ENCODE measurements at regions of chr4 and their contacts with region 1.

Region 1: DNA sequence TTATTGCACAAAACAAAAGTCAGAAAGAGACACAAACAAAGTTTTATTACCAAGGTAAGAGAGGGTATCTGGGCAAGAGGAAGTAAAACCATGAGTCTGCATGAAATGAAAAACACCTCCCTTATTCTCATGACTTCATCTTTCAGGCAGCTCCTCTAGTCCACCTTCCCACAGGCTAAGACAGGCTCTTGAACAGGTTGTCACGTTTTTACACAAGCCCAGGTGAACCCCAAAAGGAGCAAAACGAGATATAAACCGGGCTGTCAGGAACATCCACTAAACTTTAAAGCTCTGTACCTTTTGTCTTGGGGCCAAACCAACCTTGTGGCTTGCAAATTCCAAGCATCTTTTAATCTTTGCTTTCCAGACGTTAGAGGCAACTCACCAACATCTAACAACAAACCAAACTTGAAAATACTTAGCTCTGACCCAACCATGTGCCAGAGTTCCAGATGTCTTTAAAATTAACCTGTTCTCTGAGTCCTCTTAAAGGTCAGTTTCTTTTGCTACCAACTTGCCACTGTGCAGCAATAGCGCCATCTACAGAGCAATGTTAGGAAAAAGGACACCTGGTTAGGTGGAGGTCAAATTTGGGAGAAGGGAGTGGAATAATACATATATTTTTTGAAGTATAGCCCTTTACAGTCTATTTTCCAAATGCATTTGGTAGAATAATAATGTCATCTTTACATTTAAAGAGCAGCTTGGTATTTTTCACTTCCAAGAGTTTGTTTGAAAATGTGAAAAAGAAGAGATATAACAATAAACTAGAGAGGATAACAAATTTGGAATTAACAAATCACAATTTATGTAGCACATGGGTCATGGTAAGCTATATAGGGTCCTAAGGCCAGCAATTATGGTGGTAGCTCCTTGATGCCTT is 73.1 kb downstream of the QRFPR start:
- DNase-seq: peak; percentile 5 to 56 (median 33)
- H3K4me3 ChIP-seq: no peak overlapping the region
- H3K4me3 Mint-ChIP-seq: peak overlapping the region in 3 of 7 donors; percentile 27 to 50 (median 28)
- H3K27ac ChIP-seq: no peak overlapping the region
- H3K27ac Mint-ChIP-seq: peak overlapping the region in 6 of 8 donors; percentile 13 to 72 (median 62)
- H3K4me1 ChIP-seq: peaks cover 8% of the 10 kb centered on the region
- H3K4me1 Mint-ChIP-seq: peaks cover 13 to 18% (median 15%) of the 10 kb centered on the region in 3 donors
- H3K27me3 ChIP-seq: no peaks in the 10 kb centered on the region
- H3K27me3 Mint-ChIP-seq: no peaks in the 10 kb centered on the region

Region 2: GRCh38 chr4:121243485-121243884 is 64.2 kb before region 1 on chr4:
- CTCF ChIA-PET with region 1: interaction called, 10 read pairs
- POLR2A ChIA-PET with region 1: no interaction called
- DNase-seq: no peak
- H3K4me3 ChIP-seq: peak overlapping the region; percentile 16
- H3K4me3 Mint-ChIP-seq: peak overlapping the region; percentile 74 to 89 (median 85)
- H3K27ac ChIP-seq: no peak overlapping the region
- H3K27ac Mint-ChIP-seq: peak overlapping the region in 6 of 8 donors; percentile 21 to 83 (median 66)
- H3K4me1 ChIP-seq: peaks cover 8% of the 10 kb centered on the region
- H3K4me1 Mint-ChIP-seq: peaks cover 13 to 32% (median 21%) of the 10 kb centered on the region in 3 donors
- H3K27me3 ChIP-seq: no peaks in the 10 kb centered on the region
- H3K27me3 Mint-ChIP-seq: no peaks in the 10 kb centered on the region